Esophagus squamous epithelium (tissue), 5 donors: ENCODE measurements at regions of chr14 and their contacts with region 1.

Region 1: GRCh38 chr14:102509744-102510615 is at the start of gene ANKRD9:
- DNase-seq: peak; percentile 55
- H3K4me3 ChIP-seq: peak within 1 kb of the TSS; percentile 60 to 78 (median 69)
- H3K27ac ChIP-seq: peak within 1 kb of the TSS; percentile 88 to 95 (median 92)
- H3K4me1 ChIP-seq: peaks cover 18 to 34% (median 23%) of the 10 kb centered on the region in 3 donors
- H3K27me3 ChIP-seq: no peaks in the 10 kb centered on the region
- CTCF ChIP-seq: no peak
- POLR2A ChIP-seq: peak in 2 of 4 donors; percentile 35 to 66
- total RNA-seq, gene ANKRD9: 20.0 to 39.0 (median 30.2) TPM

Region 2: DNA sequence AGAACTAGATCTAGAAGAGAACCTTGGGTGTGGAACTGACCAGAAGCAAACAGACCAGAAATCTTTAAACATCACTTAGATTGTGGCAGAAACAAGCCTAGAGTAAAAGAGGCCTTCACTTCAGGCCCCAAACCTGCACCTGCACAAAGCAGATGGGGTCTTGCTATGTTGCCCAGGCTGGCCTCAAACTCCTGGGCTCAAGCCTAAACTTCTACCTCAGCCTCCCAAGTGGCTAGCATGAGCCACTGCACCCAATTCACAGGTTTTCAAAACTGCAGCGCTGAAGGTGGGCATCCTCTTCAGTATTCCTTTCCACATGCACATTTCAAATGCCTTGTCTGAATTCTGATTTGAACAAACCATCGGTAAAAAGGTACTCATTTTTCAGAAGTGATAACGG is 224.9 kb before region 1 on chr14:
- intact Hi-C with region 1: no loop called
- DNase-seq: no peak
- H3K4me3 ChIP-seq: no peak overlapping the region
- H3K27ac ChIP-seq: no peak overlapping the region
- H3K4me1 ChIP-seq: peaks cover 0 to 8% (median 2%) of the 10 kb centered on the region in 3 donors
- H3K27me3 ChIP-seq: no peaks in the 10 kb centered on the region
- CTCF ChIP-seq: no peak
- POLR2A ChIP-seq: no peak

Region 3: DNA sequence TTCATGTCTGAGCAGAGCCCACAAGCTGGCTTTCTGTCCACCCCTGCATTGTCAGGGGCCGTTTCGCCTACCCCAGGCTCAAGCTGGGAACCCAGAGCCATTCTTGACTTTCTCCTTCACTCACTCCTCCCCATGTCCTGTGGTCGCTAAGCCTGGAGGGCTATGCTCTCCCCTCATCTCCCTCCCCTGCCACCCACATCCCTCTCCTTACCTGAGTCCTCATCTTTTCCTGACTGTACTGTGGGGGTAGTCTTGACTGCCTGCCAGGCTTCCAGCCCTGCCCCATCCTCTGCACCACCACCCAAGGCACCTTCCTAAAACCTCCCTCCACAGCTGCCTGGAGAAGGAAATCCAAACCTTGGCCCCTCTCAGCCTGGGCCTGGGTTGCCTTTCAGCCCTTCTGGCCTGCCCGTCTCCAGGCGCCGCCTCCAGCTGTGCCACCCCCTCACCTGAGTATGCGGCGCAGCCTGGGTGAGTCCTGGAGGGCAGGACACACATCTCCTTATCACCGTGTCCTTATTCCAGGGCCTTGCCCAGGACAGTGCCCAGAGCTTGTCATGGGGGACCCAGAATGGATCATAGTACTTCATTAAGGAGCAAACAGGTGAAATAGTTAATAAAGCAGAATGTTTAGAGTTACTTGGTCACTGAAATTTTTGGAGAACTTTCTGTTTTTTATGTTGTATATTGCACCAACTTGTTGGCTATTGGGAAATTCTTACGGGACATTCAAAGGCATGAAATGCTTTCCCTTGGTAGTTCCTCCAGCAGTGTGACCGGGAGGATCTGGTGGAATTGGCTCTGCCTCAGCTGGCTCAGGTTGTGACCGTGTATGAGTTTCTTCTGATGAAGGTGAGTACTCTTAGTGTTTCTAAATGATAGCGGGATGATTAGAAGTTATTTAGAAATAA is 175.9 kb before region 1 on chr14:
- intact Hi-C with region 1: loop called (anchors 10 kb)
- DNase-seq: no peak
- H3K4me3 ChIP-seq: no peak overlapping the region
- H3K27ac ChIP-seq: no peak overlapping the region
- H3K4me1 ChIP-seq: peaks cover 0 to 8% (median 0%) of the 10 kb centered on the region in 3 donors
- H3K27me3 ChIP-seq: no peaks in the 10 kb centered on the region
- CTCF ChIP-seq: no peak
- POLR2A ChIP-seq: no peak

Region 4: DNA sequence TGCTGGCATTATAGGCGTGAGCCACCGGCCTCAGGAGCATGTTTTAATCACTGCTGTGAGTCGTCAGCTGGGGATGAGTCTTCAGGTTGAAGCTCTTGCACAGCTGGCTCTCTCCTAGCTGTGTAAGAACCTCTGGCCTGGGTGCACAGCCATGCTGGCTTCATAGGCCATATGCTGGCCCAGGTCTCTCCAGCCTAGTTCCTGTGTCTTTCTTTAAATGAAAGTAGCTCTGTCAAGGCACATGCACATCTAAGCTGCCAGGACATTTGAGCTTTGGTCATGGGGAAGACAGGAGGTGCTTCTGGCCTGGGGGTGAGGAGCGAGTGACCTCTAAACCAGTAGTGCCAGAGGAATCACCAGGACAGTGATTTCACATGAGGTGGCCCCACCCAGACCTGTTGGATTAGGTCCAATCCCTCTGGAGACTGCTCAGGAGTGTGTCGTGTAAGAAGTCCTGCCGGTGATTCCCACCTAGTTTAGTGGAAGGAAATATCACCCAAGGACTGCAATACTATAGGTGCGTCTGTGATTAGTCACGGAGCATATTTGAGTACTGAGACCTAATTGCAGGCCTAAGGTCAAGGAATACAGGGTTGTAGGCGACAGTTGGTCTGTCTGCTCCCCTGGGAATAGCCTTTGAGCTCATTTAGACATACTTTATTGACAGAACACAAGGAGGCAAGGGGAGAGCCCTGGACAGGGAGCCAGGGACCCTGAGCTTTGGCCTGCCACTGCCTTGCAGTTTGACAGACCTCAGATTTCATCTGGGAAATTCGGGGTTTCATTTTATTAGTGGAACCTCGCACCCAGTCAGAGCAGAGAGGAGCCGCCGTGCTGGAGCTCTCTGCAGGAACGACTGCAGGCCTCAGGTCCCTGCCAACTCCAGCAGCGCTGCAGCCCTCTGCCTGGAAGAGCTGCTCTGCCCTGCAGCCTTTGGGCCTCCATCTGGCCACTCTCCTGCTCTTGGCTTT is 67.5 kb before region 1 on chr14:
- intact Hi-C with region 1: no loop called
- DNase-seq: no peak
- H3K4me3 ChIP-seq: no peak overlapping the region
- H3K27ac ChIP-seq: peak overlapping the region in 1 of 4 donors; percentile 29
- H3K4me1 ChIP-seq: peaks cover 0 to 18% (median 0%) of the 10 kb centered on the region in 3 donors
- H3K27me3 ChIP-seq: no peaks in the 10 kb centered on the region
- CTCF ChIP-seq: no peak
- POLR2A ChIP-seq: no peak

Region 5: DNA sequence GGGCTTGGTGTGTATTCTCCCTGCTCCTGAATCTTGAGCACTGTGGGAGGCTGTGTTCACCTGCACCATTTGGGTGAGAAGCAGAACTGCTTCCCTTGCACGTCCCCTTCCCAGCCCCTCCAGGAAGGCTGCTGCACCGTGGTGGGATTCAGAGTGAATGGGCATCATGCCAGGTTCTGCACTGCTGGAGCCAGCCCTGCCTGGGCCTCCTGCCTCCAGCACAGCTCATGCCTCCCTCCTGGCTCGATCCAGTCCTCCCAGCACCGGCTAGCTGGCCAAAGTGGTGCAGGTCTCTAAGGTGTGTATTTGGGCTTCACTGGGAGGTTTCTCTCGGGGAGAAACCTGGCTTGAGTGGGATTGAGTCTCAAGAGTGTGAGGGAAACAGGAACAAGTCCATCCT is 55.2 kb before region 1 on chr14:
- intact Hi-C with region 1: no loop called
- DNase-seq: no peak
- H3K4me3 ChIP-seq: no peak overlapping the region
- H3K27ac ChIP-seq: no peak overlapping the region
- H3K4me1 ChIP-seq: no peaks in the 10 kb centered on the region
- H3K27me3 ChIP-seq: no peaks in the 10 kb centered on the region
- CTCF ChIP-seq: no peak
- POLR2A ChIP-seq: no peak

Region 6: GRCh38 chr14:102622262-102622885 is 112.4 kb after region 1 on chr14:
- intact Hi-C with region 1: no loop called
- DNase-seq: no peak
- H3K4me3 ChIP-seq: no peak overlapping the region
- H3K27ac ChIP-seq: no peak overlapping the region
- H3K4me1 ChIP-seq: peaks cover 0 to 12% (median 4%) of the 10 kb centered on the region in 3 donors
- H3K27me3 ChIP-seq: no peaks in the 10 kb centered on the region
- CTCF ChIP-seq: no peak
- POLR2A ChIP-seq: no peak